Dorsolateral prefrontal cortex (tissue), 120 donors: ENCODE measurements at regions of chr16 and their contacts with region 1.

Region 1: DNA sequence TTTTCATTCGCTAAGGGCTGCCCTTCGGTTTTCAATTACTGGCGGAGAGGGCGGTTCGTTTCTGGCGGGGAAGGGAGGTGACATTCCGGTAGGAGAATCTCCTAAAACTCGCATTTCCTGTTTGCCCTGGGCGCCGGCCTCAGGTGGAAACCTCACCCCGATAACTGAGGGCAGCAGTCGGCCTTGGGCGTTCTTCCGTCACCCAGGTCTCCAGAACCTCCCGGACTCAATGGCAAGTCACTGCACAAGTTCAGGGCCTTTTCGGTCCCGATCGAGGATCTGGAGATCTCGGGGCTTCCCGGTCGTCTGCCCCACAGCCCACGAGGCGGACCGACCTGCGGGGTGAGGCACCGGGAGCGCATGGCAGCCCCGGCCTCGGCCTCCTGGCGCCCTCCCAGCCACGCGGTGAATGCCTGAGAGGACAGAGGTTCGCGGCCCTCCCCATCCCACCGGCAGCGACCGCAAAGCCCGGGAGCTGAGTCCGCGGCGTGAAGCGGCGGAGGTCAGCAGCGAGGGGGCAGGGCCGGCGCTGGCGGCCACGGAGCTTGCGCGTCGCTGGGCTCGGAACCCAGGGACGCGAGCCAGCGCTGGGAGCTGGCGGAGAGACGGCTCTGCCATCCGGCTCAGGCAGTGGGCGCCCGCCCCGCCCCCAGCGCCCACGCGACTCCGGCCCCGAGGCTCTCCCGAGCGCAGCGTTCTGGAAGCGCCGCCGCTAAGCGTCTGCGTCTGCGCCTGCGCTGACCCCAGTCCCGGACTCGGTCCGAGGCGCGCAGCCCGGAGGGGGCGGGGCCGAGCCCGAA is 58.4 kb downstream of the SRL start:
- DNase-seq: peak; percentile 78 to 96 (median 86)
- H3K4me3 ChIP-seq: peak overlapping the region; percentile 54 to 92 (median 78)
- H3K27ac ChIP-seq: peak overlapping the region; percentile 47 to 98 (median 94)
- H3K27me3 ChIP-seq: no peaks in the 10 kb centered on the region
- CTCF ChIP-seq: peak in 49 of 56 donors; percentile 11 to 71 (median 42)

Region 2: GRCh38 chr16:3983081-3983520 is 200.3 kb before region 1 on chr16:
- intact Hi-C with region 1: loop called in 1 of 2 experiments (anchors 10 kb)
- DNase-seq: peak; percentile 39 to 85 (median 70)
- H3K4me3 ChIP-seq: no peak overlapping the region
- H3K27ac ChIP-seq: no peak overlapping the region
- H3K27me3 ChIP-seq: no peaks in the 10 kb centered on the region
- CTCF ChIP-seq: peak in 54 of 56 donors; percentile 15 to 81 (median 65)

Region 3: DNA sequence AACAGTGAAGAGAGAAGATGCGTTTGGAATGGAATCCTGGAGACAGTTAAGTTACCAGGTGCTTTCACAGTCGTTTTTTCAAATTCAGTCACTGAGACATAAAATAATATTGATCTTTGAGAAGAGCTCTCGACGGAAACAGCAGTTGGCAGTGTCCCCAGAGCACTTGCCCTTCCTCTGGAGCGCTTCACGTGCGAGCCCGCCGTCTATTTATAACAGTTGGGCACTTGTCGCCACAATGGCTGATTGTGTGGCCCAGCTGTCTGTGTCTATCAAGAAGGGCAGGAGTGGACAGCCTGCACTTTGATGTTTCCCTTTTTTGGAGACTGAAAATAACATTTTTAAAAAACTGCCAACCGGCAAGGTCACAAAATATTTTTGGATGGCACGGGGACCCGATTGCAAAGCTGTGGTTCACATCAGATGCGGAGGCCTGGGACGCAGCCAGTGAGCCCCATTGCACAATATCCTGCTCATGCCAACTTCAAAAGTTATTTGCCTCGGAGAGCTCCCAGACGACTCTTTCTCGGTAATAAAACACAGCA is 130.1 kb before region 1 on chr16:
- intact Hi-C with region 1: loop called in 1 of 2 experiments (anchors 5 kb)
- DNase-seq: peak; percentile 25 to 86 (median 71)
- H3K4me3 ChIP-seq: peak overlapping the region in 55 of 59 donors; percentile 3 to 52 (median 32)
- H3K27ac ChIP-seq: peak overlapping the region in 43 of 59 donors; percentile 1 to 74 (median 47)
- H3K27me3 ChIP-seq: peaks cover 0 to 4% (median 0%) of the 10 kb centered on the region in 45 donors
- CTCF ChIP-seq: peak in 2 of 56 donors; percentile 17 to 26

Region 4: GRCh38 chr16:4103745-4104144 is 79.7 kb before region 1 on chr16:
- intact Hi-C with region 1: no loop called
- DNase-seq: no peak
- H3K4me3 ChIP-seq: no peak overlapping the region
- H3K27ac ChIP-seq: no peak overlapping the region
- H3K27me3 ChIP-seq: no peaks in the 10 kb centered on the region
- CTCF ChIP-seq: no peak

Region 5: GRCh38 chr16:4116337-4117249 is 66.8 kb before region 1 on chr16 and contains the start of gene ADCY9:
- intact Hi-C with region 1: loop called (anchors 1 to 5 kb)
- DNase-seq: peak in 9 of 10 donors; percentile 36 to 82 (median 62)
- H3K4me3 ChIP-seq: peak within 1 kb of the TSS; percentile 59 to 86 (median 73)
- H3K27ac ChIP-seq: peak within 1 kb of the TSS in 48 of 59 donors; percentile 9 to 86 (median 72)
- H3K27me3 ChIP-seq: no peaks in the 10 kb centered on the region
- CTCF ChIP-seq: no peak
- total RNA-seq, gene ADCY9: 16.3 to 55.2 (median 33.9) TPM

Region 6: GRCh38 chr16:4160658-4161430 is 22.6 kb before region 1 on chr16:
- intact Hi-C with region 1: no loop called
- DNase-seq: no peak
- H3K4me3 ChIP-seq: no peak overlapping the region
- H3K27ac ChIP-seq: no peak overlapping the region
- H3K27me3 ChIP-seq: no peaks in the 10 kb centered on the region
- CTCF ChIP-seq: no peak

Region 7: GRCh38 chr16:4253394-4254150 is 70.1 kb after region 1 on chr16:
- intact Hi-C with region 1: loop called (anchors 1 to 5 kb)
- DNase-seq: peak; percentile 92 to 99 (median 98)
- H3K4me3 ChIP-seq: peak overlapping the region; percentile 55 to 91 (median 78)
- H3K27ac ChIP-seq: peak overlapping the region; percentile 60 to 98 (median 93)
- H3K27me3 ChIP-seq: no peaks in the 10 kb centered on the region
- CTCF ChIP-seq: peak in 6 of 56 donors; percentile 99 to 100 (median 100)

Region 8: DNA sequence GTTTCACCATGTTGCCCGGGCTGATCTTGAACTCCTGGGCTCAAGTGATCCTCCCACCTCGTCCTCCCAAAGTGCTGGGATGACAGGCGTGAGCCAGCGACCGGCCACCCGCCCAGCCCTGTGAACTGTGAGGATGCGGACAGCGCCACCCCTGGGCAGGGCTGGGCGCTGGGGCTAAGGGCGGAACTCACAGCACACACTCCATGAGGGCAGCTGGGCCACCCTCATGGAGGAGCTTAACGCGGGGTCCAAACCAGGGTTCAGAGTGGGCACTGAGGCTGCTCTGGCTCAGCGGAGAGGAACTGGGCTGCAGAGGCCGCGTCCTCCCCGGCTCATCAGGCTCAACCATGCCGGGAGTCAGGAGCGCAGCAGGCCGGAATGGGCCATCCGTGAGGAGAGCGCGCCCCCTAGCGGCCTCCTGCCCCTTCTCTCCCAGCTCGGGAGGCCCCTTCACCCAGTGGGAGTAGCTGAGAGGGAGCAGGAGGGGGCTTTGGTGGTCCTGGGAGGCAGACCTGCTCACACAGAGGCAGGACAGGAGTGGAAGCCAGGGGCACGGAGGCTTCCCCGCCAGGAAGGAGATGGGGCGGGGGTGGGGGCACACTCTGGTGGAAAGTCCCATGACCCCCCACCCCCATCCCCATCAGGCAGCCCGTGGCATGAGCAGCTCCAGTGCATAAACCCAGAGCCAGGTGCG is 219.1 kb after region 1 on chr16:
- intact Hi-C with region 1: loop called in 1 of 2 experiments (anchors 10 kb)
- DNase-seq: peak; percentile 76 to 92 (median 85)
- H3K4me3 ChIP-seq: peak overlapping the region in 24 of 59 donors; percentile 6 to 44 (median 26)
- H3K27ac ChIP-seq: peak overlapping the region in 32 of 59 donors; percentile 3 to 86 (median 34)
- H3K27me3 ChIP-seq: no peaks in the 10 kb centered on the region
- CTCF ChIP-seq: peak; percentile 77 to 98 (median 93)